B cell (primary cell): ENCODE measurements at regions of chr10 and their contacts with region 1.

Region 1: GRCh38 chr10:79424221-79425073 is 21.0 kb downstream of the ZCCHC24 start:
- DNase-seq: no peak
- ATAC-seq: no peak
- H3K4me3 ChIP-seq: no peak overlapping the region
- H3K4me3 Mint-ChIP-seq: no peak overlapping the region
- H3K27ac ChIP-seq: no peak overlapping the region
- H3K27ac Mint-ChIP-seq: no peak overlapping the region
- H3K4me1 ChIP-seq: peaks cover 0 to 2% of the 10 kb centered on the region in 2 donors
- H3K4me1 Mint-ChIP-seq: peaks cover 2% of the 10 kb centered on the region
- H3K27me3 ChIP-seq: no peaks in the 10 kb centered on the region
- H3K27me3 Mint-ChIP-seq: no peaks in the 10 kb centered on the region
- CTCF ChIP-seq: no peak

Region 2: DNA sequence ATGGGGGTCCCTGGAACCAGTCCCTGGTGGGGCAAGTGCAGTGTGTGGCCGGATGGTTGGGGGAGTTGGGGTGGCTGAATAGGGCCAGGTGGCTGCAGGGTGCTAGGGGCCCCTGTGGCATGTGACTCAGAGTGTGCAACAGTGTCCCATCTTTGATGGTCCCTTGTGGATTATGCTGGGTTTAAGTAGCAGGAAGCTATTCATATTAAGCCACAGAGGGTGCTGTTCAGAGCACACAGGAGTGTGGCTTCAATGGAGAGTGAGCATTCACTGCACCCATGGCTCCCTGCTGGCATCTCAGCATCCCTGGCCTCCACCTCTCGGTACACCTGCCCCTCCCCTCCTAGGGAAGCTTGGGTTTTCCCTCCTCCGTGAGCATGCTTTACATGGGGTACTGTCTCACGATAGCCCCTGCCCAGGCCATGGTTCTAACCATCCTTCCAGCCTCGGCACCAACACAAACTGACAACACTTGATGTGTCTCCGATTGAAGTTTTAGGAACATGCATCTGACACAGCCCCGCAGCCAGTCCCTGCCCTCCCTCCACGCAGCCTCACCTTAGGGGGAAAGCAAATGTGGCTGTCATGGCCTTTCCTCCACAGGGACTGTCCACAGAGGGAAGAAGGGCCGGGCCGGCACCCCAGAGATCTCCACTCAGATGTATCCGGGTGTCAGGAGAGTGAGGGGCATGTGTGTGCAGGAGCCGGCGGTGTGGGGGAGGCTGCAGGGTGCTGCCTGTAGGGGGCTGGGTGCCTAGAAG is 107.6 kb before region 1 on chr10:
- CTCF ChIA-PET with region 1: no interaction called
- POLR2A ChIA-PET with region 1: no interaction called
- intact Hi-C with region 1: no loop called
- DNase-seq: peak; percentile 33
- ATAC-seq: peak; percentile 78
- H3K4me3 ChIP-seq: no peak overlapping the region
- H3K4me3 Mint-ChIP-seq: peak overlapping the region; percentile 73
- H3K27ac ChIP-seq: no peak overlapping the region
- H3K27ac Mint-ChIP-seq: peak overlapping the region; percentile 51
- H3K4me1 ChIP-seq: peaks cover 17 to 21% of the 10 kb centered on the region in 2 donors
- H3K4me1 Mint-ChIP-seq: peaks cover 33% of the 10 kb centered on the region
- H3K27me3 ChIP-seq: no peaks in the 10 kb centered on the region
- H3K27me3 Mint-ChIP-seq: no peaks in the 10 kb centered on the region
- CTCF ChIP-seq: no peak

Region 3: GRCh38 chr10:80136081-80136571 is 711.7 kb after region 1 on chr10:
- CTCF ChIA-PET with region 1: no interaction called
- POLR2A ChIA-PET with region 1: interaction called, 10 read pairs
- intact Hi-C with region 1: no loop called
- DNase-seq: no peak
- ATAC-seq: no peak
- H3K4me3 ChIP-seq: no peak overlapping the region
- H3K4me3 Mint-ChIP-seq: no peak overlapping the region
- H3K27ac ChIP-seq: no peak overlapping the region
- H3K27ac Mint-ChIP-seq: no peak overlapping the region
- H3K4me1 ChIP-seq: peaks cover 0 to 6% of the 10 kb centered on the region in 2 donors
- H3K4me1 Mint-ChIP-seq: peaks cover 3% of the 10 kb centered on the region
- H3K27me3 ChIP-seq: peaks cover 0 to 27% (median 5%) of the 10 kb centered on the region in 4 experiments
- H3K27me3 Mint-ChIP-seq: peaks cover 47% of the 10 kb centered on the region
- CTCF ChIP-seq: no peak